IMR-90 (cell line): ENCODE measurements at regions of chr11 and their contacts with region 1.

Region 1: DNA sequence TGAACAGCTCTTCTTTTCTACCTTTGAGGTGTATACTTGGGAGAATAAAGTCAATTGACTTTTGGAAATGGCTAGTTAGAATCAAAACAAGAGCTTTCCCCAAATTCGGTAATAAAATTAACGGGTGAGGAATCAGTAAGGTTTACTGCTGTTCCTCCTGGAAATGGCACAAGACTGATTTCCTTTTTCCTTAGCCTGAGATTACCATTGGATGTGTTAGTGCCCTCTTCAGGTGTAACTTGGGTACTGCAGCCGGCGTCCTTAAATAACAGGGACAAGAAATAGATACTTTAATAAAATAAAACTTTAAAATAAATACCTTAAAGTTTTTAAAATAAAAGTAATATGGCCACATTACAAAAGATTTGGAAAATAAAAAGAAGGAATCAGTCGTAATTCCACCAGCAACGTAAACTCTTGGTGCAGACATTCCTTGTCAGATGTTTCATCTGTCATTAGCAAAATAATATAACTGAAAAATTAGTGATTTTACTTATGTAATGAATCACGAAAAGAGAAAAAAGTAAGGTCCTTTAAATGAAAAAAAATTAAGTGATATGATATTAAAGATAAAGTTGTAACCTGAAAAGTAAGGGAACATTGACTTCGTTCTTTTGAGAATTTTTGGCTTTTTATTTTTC is 29.7 kb downstream of the ZFTA start:
- DNase-seq: peak; percentile 84
- ATAC-seq: peak; percentile 97
- H3K4me3 ChIP-seq: no peak overlapping the region
- H3K27ac ChIP-seq: no peak overlapping the region
- H3K4me1 ChIP-seq: no peaks in the 10 kb centered on the region
- H3K27me3 ChIP-seq: no peaks in the 10 kb centered on the region
- CTCF ChIP-seq: peak; percentile 91
- POLR2A ChIP-seq: no peak
- RAD21 ChIP-seq: peak; percentile 79

Region 2: DNA sequence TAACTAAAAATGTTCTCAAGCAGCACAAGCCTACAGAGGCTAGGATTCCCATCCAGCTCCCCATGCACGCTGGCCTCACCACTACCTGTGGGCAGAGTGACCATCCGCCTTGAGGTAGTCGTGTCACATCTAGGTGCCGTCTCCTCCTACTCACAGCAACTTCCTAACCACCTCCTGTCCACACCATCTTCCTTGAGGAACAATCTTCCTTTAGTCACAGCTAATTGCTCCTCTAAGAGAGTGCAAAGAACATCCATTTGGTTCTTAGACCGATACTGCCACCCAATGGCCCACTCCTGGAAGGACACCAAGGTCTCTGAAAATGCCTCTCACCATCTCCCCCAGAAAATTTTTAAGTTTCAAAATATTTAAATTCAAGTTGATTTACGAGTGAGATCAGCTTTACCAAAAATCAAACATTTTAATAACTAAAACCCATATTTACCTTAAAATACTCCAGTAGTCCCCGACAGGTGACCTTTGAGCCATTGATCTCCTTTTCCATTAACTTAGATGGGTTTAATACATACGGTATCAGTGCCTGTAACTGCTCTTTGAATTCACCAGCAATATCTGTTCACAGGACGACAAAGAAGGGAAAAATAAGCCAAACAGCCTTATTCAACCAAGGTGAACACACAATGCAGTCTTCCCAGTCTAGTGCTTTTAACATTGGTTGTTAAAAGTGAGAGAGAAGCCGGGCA is 102.9 kb before region 1 on chr11:
- CTCF ChIA-PET with region 1: no interaction called
- POLR2A ChIA-PET with region 1: no interaction called
- dilution Hi-C with region 1: no loop called
- in situ Hi-C with region 1: no loop called
- intact Hi-C with region 1: loop called (anchors 2 kb)
- DNase-seq: peak; percentile 63
- ATAC-seq: peak; percentile 94
- H3K4me3 ChIP-seq: no peak overlapping the region
- H3K27ac ChIP-seq: no peak overlapping the region
- H3K4me1 ChIP-seq: no peaks in the 10 kb centered on the region
- H3K27me3 ChIP-seq: no peaks in the 10 kb centered on the region
- CTCF ChIP-seq: peak; percentile 84
- POLR2A ChIP-seq: 0 out of 2 replicates have a peak, but pooled peaks have one; percentile 31
- RAD21 ChIP-seq: peak; percentile 91

Region 3: GRCh38 chr11:63681321-63682049 is 57.4 kb before region 1 on chr11 and contains the start of gene RTN3:
- CTCF ChIA-PET with region 1: no interaction called
- POLR2A ChIA-PET with region 1: no interaction called
- dilution Hi-C with region 1: no loop called
- in situ Hi-C with region 1: no loop called
- intact Hi-C with region 1: loop called (anchors 1 kb)
- DNase-seq: peak; percentile 98
- ATAC-seq: peak; percentile 97
- H3K4me3 ChIP-seq: peak within 1 kb of the TSS; percentile 87
- H3K27ac ChIP-seq: peak within 1 kb of the TSS; percentile 79
- H3K4me1 ChIP-seq: peaks cover under 1% of the 10 kb centered on the region
- H3K27me3 ChIP-seq: no peaks in the 10 kb centered on the region
- CTCF ChIP-seq: 0 out of 2 replicates have a peak, but pooled peaks have one; percentile 9
- POLR2A ChIP-seq: peak; percentile 92
- RAD21 ChIP-seq: no peak; the same call in 1 of the 2 replicates
- total RNA-seq, gene RTN3: 31.2 and 42.5 TPM in 2 replicates